Activated CD4-positive, alpha-beta T cell treated with anti-CD3 and anti-CD28 coated beads for 36 hours (primary cell): ENCODE measurements at regions of chr2 and their contacts with region 1.

Region 1: GRCh38 chr2:160970052-160970965 is 189.9 kb upstream of the TANK start:
- DNase-seq: peak; percentile 20
- ATAC-seq: no peak
- H3K4me3 Mint-ChIP-seq: no peak overlapping the region
- H3K27ac Mint-ChIP-seq: no peak overlapping the region
- H3K4me1 Mint-ChIP-seq: peaks cover 5% of the 10 kb centered on the region
- H3K27me3 Mint-ChIP-seq: peaks cover 1% of the 10 kb centered on the region

Region 2: DNA sequence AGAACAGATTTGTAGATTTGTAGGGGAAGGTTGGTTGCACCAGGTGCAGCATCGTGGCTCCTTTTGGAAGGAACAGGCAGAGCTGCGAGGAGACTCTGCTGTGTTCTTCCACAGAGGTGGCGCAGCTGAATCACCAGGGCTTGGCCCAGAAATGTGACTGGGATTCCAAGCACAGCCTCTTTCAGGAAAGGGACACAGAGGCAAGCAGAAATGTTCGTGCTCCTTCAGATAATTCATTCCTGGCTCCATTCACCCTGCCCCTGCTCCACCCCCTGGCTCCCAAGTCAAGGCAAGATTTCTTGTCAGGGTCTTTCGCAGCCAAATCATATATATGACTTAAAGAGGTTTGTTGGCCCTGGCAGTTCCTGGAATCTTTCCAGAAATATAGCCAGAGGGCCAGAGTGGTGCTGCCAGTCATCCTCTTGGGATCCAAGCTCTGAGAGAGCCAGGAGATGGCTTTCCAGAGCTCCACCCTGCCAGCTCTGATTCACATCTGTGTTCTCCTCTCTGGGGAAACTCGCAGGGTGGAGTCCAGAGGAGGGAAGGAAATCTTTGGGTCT is 14.0 kb before region 1 on chr2:
- CTCF ChIA-PET with region 1: interaction called, 10 read pairs
- POLR2A ChIA-PET with region 1: no interaction called
- intact Hi-C with region 1: no loop called
- DNase-seq: no peak
- ATAC-seq: no peak
- H3K4me3 Mint-ChIP-seq: no peak overlapping the region
- H3K27ac Mint-ChIP-seq: no peak overlapping the region
- H3K4me1 Mint-ChIP-seq: no peaks in the 10 kb centered on the region
- H3K27me3 Mint-ChIP-seq: no peaks in the 10 kb centered on the region

Region 3: DNA sequence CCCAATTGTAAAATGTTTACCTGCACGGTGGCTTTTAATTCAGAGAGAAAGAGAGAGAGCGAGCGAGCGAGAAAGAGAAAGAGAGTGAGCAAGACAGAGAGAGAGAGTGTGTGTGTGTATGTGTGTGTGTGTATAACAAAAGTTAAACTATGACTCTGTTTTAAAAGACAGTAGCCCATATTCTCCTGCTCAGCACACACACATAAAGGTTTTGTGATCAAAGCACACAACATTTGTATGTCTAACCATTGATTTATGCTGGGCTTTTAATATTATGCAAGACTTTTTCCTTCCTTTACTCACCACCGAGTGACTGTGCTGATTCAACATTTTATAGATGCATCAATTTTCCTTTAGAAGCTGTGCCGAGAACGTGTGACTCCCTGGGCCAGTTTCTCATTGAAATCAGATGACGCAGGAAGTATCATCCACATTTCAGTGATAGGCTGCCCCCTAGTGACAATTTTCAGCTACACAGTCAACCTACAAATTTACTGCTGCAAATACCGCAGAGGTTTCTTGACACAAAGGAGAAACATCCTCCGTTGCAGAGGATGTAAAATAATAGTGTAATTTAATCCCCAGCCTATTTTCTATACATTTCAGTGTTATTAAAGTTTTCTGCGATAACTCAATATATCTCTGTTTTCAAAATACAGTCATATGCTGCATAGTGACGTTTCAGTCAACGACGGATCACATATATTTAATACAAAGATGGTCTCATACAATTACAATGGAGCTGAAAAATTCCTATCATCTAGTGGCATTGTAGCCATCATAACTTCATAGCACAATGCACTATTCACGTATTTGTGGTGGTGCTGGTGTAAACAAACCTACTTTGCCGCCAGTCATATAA is 24.1 kb after region 1 on chr2:
- CTCF ChIA-PET with region 1: interaction called, 12 read pairs
- POLR2A ChIA-PET with region 1: no interaction called
- intact Hi-C with region 1: no loop called
- DNase-seq: peak; percentile 79
- ATAC-seq: peak; percentile 94
- H3K4me3 Mint-ChIP-seq: no peak overlapping the region
- H3K27ac Mint-ChIP-seq: no peak overlapping the region
- H3K4me1 Mint-ChIP-seq: peaks cover 10% of the 10 kb centered on the region
- H3K27me3 Mint-ChIP-seq: no peaks in the 10 kb centered on the region